Posterior vena cava (tissue), 2 donors: ENCODE measurements at regions of chr21 and their contacts with region 1.

Region 1: GRCh38 chr21:17903029-17903806 is 84.1 kb upstream of the C21orf91 start:
- DNase-seq: no peak

Region 2: GRCh38 chr21:17679002-17679600 is 224.1 kb before region 1 on chr21:
- intact Hi-C with region 1: loop called in 1 of 2 experiments (anchors 5 kb)
- DNase-seq: no peak

Region 3: DNA sequence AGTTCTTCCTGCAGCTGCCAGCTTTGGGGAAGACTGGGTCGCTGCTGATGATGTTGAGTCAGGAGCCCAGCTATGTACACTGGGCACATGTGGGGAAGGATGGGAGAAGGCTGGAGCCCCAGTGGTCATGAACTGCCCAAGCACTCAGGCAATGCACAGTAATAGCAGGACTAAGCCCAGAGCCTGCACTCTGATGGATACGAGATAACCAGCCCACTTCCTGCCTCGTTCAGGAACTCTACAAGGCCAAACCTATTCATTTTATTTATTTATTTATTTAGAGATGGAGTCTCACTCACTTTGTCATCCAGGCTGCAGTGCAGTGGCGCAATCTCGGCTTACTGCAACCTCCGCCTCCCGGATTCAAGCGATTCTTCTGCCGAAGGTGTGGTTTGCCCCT is 209.4 kb before region 1 on chr21:
- intact Hi-C with region 1: loop called in 1 of 2 experiments (anchors 5 kb)
- DNase-seq: no peak

Region 4: GRCh38 chr21:17708522-17709265 is 194.5 kb before region 1 on chr21:
- intact Hi-C with region 1: no loop called
- DNase-seq: no peak

Region 5: DNA sequence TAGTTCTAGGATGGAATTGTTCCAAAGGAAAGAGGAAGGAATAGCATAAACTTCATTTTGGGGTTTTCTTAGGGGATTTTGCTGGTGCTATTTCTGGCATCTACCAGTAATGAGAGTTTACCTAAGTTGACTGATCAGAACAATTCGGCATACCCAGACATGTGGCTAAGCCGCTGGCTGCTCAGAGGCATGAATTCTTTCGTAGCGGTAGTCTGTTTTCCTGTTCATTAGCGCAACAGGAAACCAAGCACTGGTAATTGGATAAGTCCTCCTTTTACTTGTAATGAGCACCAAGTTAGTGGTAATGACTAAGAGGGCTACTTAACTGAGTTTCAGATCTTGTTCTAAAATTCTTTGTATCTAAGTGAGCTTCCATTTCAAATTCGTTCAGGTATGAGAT is 122.7 kb before region 1 on chr21:
- intact Hi-C with region 1: no loop called
- DNase-seq: no peak

Region 6: DNA sequence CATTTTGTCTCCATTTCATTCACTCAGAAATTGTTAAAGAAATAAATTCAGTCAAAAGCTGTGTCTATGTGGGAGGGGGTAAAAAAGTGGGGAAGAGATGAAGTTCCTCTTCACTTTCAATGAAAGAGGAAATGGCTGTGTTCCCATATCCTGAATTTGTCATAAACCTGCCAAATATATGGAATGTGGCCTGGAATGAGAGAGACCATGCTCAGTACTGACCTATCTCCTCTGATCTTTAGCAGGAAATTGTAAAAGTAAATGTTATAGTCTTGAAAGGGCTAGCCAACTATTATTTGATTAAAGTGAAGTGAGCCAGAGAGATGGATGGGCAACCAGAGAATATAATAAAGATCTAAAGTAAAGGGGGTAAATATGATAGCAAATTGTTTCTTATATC is 46.2 kb after region 1 on chr21:
- intact Hi-C with region 1: no loop called
- DNase-seq: no peak

Region 7: GRCh38 chr21:18104802-18105201 is 201.6 kb after region 1 on chr21:
- intact Hi-C with region 1: no loop called
- DNase-seq: no peak